Activated CD4-positive, alpha-beta memory T cell treated with anti-CD3 and anti-CD28 coated beads for 36 hours (primary cell): ENCODE measurements at regions of chr3 and their contacts with region 1.

Region 1: GRCh38 chr3:8239718-8240695 is 261.6 kb upstream of the LMCD1 start:
- DNase-seq: peak; percentile 21
- H3K4me3 Mint-ChIP-seq: no peak overlapping the region
- H3K27ac Mint-ChIP-seq: no peak overlapping the region
- H3K4me1 Mint-ChIP-seq: no peaks in the 10 kb centered on the region
- H3K27me3 Mint-ChIP-seq: peaks cover 1% of the 10 kb centered on the region

Region 2: GRCh38 chr3:8197384-8197783 is 42.6 kb before region 1 on chr3:
- CTCF ChIA-PET with region 1: no interaction called
- POLR2A ChIA-PET with region 1: no interaction called
- intact Hi-C with region 1: no loop called
- DNase-seq: no peak
- H3K4me3 Mint-ChIP-seq: no peak overlapping the region
- H3K27ac Mint-ChIP-seq: no peak overlapping the region
- H3K4me1 Mint-ChIP-seq: no peaks in the 10 kb centered on the region
- H3K27me3 Mint-ChIP-seq: peaks cover 3% of the 10 kb centered on the region

Region 3: DNA sequence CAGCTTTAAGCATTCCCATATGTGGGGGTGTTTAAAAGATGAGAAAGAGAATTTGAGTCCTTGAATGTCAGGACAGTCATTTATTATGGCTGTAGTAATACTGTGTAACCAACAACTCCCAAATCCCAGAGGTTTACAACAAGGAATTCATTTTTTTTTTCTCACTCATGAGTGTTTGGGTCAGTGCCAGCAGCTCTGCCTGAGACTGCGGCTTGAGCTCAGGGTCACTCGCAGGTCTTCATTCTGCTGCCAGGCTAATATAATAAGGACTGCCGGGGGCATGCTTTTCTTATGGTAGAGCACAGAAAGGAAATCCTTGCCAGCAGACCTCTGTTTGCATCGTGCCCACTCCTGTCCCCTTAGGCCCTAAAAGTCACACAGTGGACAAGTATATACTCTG is 16.2 kb before region 1 on chr3:
- CTCF ChIA-PET with region 1: interaction called, 25 read pairs
- POLR2A ChIA-PET with region 1: no interaction called
- intact Hi-C with region 1: no loop called
- DNase-seq: no peak
- H3K4me3 Mint-ChIP-seq: no peak overlapping the region
- H3K27ac Mint-ChIP-seq: no peak overlapping the region
- H3K4me1 Mint-ChIP-seq: no peaks in the 10 kb centered on the region
- H3K27me3 Mint-ChIP-seq: no peaks in the 10 kb centered on the region

Region 4: GRCh38 chr3:8254489-8254888 is 14.5 kb after region 1 on chr3:
- CTCF ChIA-PET with region 1: interaction called, 10 read pairs
- POLR2A ChIA-PET with region 1: no interaction called
- intact Hi-C with region 1: no loop called
- DNase-seq: no peak
- H3K4me3 Mint-ChIP-seq: no peak overlapping the region
- H3K27ac Mint-ChIP-seq: no peak overlapping the region
- H3K4me1 Mint-ChIP-seq: no peaks in the 10 kb centered on the region
- H3K27me3 Mint-ChIP-seq: no peaks in the 10 kb centered on the region

Region 5: GRCh38 chr3:8301728-8302462 is 61.9 kb after region 1 on chr3:
- CTCF ChIA-PET with region 1: interaction called, 10 read pairs
- POLR2A ChIA-PET with region 1: no interaction called
- intact Hi-C with region 1: no loop called
- DNase-seq: no peak
- H3K4me3 Mint-ChIP-seq: no peak overlapping the region
- H3K27ac Mint-ChIP-seq: no peak overlapping the region
- H3K4me1 Mint-ChIP-seq: no peaks in the 10 kb centered on the region
- H3K27me3 Mint-ChIP-seq: no peaks in the 10 kb centered on the region

Region 6: DNA sequence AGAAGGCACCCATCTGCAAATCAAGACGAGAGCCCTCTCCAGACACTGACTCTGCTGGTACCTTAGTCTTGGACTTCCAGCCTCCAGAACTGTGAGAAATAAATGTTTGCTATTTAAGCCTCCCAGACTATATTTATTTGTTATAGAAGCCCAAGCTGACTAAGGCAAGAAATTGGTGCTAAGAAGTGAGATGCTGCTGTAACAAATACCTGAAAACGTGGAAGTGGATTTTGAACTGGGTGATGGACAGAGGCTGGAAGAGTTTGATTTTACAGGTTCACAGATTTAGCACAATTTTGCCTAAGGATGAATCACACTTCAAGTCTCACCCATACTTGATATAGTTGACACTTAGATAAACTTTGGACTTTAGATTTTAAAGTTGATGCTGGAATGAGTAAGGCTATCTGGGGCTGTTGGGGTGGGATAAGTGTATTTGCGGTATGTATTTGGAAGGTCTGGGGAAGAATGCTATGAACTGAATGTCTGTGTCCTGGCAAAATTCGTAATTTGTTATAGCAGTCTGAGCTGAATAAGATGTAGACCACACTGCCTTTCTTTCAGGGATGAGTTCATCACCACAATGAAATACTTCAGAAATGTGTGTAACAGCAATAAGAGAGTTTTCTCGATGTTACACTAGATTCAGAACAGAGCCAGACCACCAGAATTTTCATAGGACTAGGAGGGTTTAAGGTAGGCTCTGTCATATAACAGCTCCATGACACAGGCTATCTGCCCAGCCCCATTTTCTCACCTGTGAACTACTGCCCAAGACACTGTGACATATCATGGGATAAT is 141.1 kb after region 1 on chr3:
- CTCF ChIA-PET with region 1: no interaction called
- POLR2A ChIA-PET with region 1: no interaction called
- intact Hi-C with region 1: no loop called
- DNase-seq: no peak
- H3K4me3 Mint-ChIP-seq: no peak overlapping the region
- H3K27ac Mint-ChIP-seq: no peak overlapping the region
- H3K4me1 Mint-ChIP-seq: no peaks in the 10 kb centered on the region
- H3K27me3 Mint-ChIP-seq: no peaks in the 10 kb centered on the region

Region 7: GRCh38 chr3:8416965-8417364 is 177.0 kb after region 1 on chr3:
- CTCF ChIA-PET with region 1: interaction called, 22 read pairs
- POLR2A ChIA-PET with region 1: no interaction called
- intact Hi-C with region 1: no loop called
- DNase-seq: no peak
- H3K4me3 Mint-ChIP-seq: no peak overlapping the region
- H3K27ac Mint-ChIP-seq: no peak overlapping the region
- H3K4me1 Mint-ChIP-seq: peaks cover 9% of the 10 kb centered on the region
- H3K27me3 Mint-ChIP-seq: no peaks in the 10 kb centered on the region